Left ventricle myocardium inferior (tissue), 1 donor: ENCODE measurements at regions of chr5 and their contacts with region 1.

Region 1: GRCh38 chr5:170183816-170184687 is 48.7 kb upstream of the C5orf58 start:
- DNase-seq: peak; percentile 51
- H3K4me3 ChIP-seq: no peak overlapping the region
- H3K27ac ChIP-seq: no peak overlapping the region
- H3K4me1 ChIP-seq: no peaks in the 10 kb centered on the region
- H3K27me3 ChIP-seq: peaks cover 17% of the 10 kb centered on the region
- CTCF ChIP-seq: peak; percentile 82

Region 2: DNA sequence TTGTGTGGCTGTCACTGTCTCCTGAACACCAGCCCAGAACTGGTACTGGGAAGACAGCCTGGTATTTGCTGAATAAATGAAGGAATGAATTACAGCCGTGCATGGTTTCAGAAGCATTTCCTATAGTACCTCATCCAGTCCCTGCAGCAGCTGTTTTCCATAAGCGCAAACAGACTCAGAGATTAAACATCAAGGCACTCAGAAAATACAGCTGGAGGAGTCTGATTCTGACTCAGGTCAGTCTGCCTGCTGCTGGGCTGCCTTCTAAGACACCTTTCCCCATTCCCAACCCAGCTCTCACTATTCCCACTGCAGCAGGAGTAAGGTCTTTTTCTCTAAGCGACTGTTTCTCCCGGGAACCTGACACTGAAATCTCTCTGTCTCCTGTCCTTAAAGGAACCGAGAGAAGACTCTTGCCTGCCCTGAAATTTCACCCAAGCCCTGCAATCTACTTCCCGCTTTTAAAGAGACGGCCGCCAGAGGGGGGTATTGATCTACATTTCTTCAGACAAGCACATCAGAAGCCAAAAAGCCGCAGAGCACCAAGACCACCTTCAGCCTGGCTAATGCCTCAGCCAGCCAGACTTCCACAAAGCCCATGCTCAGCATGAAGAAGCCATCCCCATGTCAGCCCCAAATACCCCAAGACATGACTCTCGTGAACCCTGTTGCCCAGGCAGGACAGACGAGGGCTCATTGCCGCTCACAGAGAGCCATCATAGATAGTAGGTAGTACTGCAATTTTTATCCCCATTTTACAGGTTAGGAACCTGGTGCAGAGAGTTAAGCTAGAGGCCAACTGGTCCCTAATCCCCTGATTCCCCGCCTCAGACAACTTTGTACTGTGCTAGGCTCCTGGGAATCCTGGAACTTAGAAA is 83.7 kb before region 1 on chr5:
- intact Hi-C with region 1: loop called (anchors 2 kb)
- DNase-seq: peak; percentile 57
- H3K4me3 ChIP-seq: no peak overlapping the region
- H3K27ac ChIP-seq: no peak overlapping the region
- H3K4me1 ChIP-seq: no peaks in the 10 kb centered on the region
- H3K27me3 ChIP-seq: peaks cover 7% of the 10 kb centered on the region
- CTCF ChIP-seq: peak; percentile 70